ENCODE measurements at regions of chr1 and their contacts with region 1.

Region 1: DNA sequence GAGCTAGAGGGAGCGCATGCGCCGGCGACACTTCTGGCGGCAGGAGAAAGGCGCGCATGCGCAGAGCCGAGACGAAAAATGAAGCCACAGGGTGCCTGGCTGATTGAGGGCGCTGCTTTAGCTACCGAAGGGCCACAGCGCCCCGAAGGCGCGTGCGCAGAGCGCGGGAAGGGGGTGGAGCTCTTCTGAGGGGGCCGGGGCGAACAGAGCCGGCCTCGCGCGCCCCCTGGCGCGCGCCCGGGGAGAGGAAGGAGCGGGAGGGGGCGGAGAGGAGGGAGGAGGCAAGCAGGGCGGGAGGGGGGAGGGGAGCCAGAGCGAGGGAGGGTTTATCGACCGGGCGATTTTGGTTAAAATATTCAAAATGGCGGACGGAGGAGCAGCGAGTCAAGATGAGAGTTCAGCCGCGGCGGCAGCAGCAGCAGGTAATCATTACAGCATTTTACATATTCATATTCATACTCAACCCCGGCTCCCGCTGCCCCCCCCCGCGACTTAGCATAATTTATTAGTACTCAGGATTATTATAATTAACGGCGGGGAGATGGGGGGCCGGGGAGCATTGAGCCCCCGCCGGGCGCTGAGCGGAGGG is at the start of gene POU2F1:
- DNase-seq: peak; percentile 97
- H3K4me3 ChIP-seq: peak within 1 kb of the TSS; percentile 88 to 90 (median 90)
- H3K27ac ChIP-seq: peak within 1 kb of the TSS; percentile 91
- H3K4me1 ChIP-seq: peaks cover 12% of the 10 kb centered on the region
- H3K27me3 ChIP-seq: no peaks in the 10 kb centered on the region
- CTCF ChIP-seq: peak; percentile 25 to 79
- total RNA-seq, gene POU2F1: 10.2 to 14.4 TPM

Region 2: DNA sequence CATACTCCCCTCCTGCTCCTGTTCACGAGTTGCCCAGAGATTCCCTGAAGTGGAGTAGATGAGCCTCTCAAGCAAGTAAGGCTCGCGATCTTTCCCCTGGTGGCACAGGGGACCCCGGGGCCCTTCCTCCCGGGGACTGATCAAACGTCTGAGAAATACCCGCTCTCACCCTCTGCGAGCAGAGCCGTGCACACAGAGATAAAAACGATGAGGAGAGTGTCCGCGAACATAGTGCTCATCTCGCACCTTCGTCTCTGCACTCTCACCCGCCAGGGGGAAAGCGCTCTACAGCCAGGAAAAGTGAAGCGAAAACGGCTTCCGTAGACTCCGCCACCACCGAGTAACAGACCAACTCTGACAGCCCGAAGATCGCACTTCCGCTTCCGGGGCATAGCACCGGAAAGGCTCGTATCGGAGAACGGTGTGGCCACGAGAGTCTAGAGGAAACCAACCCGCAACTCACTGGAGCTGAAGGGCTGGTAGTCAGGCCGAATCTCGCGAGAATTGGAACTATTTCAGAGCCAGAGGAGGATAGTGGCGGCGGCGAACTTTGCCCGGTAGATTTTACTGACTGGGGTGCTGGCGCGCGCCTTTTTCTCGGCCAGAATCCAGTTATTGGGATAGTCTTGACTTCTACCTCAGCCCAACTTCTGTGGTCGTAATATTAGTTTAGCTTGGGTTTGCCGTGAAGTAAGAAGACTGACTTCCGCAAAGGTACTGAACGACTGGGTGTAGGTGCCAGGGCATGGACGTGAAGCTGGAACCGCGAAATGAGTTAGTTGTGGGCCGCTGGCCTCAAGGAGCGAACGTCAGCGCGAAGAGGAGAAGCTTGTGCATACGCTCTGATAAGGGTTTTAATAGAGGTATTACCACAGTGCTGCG is 1451.9 kb before region 1 on chr1 and contains the start of gene TMCO1:
- CTCF ChIA-PET with region 1: interaction called, 10 read pairs
- dilution Hi-C with region 1: no loop called
- in situ Hi-C with region 1: no loop called
- intact Hi-C with region 1: no loop called
- DNase-seq: peak; percentile 97
- H3K4me3 ChIP-seq: peak within 1 kb of the TSS; percentile 66 to 87 (median 82)
- H3K27ac ChIP-seq: peak within 1 kb of the TSS; percentile 88
- H3K4me1 ChIP-seq: peaks cover 27% of the 10 kb centered on the region
- H3K27me3 ChIP-seq: no peaks in the 10 kb centered on the region
- CTCF ChIP-seq: peak in 1 of 2 donors; percentile 33
- total RNA-seq, gene TMCO1: 79.0 to 80.9 TPM

Region 3: DNA sequence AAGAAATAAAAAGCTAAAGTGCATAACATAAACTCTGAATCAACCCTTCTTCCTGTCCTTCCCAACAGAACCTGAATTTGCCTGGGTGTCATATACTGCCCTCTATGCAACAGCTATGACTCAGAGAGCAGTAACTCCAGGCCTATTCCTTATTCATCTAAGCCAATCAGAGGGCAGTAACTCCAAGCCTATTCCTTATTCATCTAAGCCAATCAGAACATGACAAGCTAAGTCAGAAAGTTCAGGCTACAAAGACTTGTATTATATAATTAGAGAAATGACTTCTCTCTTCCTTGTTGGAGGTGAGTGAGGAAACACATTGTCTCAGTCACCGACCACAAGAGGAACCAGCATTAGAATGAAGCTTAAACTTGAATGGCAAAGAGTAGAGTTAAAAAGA is 318.4 kb before region 1 on chr1:
- CTCF ChIA-PET with region 1: no interaction called
- dilution Hi-C with region 1: no loop called
- in situ Hi-C with region 1: no loop called
- intact Hi-C with region 1: no loop called
- DNase-seq: peak; percentile 84
- H3K4me3 ChIP-seq: no peak overlapping the region
- H3K27ac ChIP-seq: no peak overlapping the region
- H3K4me1 ChIP-seq: peaks cover 8% of the 10 kb centered on the region
- H3K27me3 ChIP-seq: no peaks in the 10 kb centered on the region
- CTCF ChIP-seq: peak in 1 of 2 donors; percentile 6

Region 4: GRCh38 chr1:166925810-166926478 is 294.7 kb before region 1 on chr1:
- CTCF ChIA-PET with region 1: interaction called, 10 read pairs
- dilution Hi-C with region 1: no loop called
- in situ Hi-C with region 1: no loop called
- intact Hi-C with region 1: no loop called
- DNase-seq: no peak
- H3K4me3 ChIP-seq: no peak overlapping the region
- H3K27ac ChIP-seq: no peak overlapping the region
- H3K4me1 ChIP-seq: no peaks in the 10 kb centered on the region
- H3K27me3 ChIP-seq: peaks cover 12% of the 10 kb centered on the region
- CTCF ChIP-seq: no peak

Region 5: DNA sequence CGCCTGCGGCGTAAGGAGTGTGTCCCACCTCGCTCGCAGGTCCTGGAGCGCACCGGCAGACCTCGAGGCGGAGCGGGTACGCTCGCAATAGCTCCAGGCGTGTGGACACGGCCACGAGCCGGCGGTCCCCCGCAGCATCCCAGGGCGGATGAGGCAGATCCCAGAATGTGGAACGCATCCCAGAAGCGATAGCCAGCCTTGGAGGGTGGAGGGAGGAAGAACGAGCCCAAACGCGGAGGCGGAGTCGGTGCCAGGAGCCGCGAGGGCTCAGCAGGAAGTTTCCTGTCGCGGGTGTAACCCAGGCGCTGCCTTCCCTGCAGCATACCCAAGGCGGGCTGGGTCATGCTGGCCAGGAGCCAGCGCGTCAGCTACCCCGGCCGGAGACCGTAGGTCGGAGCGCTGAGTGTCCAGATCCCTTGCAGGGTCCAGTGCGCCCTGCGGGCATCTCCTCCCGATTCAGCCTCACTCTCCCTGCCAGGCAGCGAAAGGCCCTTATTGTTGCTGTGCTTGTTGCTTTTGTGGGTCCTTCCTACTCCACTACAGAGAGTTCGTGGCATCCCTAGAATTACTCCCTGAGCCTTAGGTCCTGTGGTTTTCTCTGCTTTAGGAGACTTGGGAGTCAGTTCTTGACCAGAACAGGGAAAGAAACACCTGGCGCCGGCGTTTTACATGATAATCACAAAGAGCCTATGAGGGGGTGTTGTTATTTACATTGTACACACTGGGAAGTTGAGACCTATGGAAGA is 99.1 kb before region 1 on chr1:
- CTCF ChIA-PET with region 1: no interaction called
- dilution Hi-C with region 1: no loop called
- in situ Hi-C with region 1: no loop called
- intact Hi-C with region 1: loop called (anchors 5 kb)
- DNase-seq: peak; percentile 32
- H3K4me3 ChIP-seq: peak overlapping the region in 2 of 3 experiments; percentile 28 to 41
- H3K27ac ChIP-seq: no peak overlapping the region
- H3K4me1 ChIP-seq: peaks cover 6% of the 10 kb centered on the region
- H3K27me3 ChIP-seq: no peaks in the 10 kb centered on the region
- CTCF ChIP-seq: no peak

Region 6: DNA sequence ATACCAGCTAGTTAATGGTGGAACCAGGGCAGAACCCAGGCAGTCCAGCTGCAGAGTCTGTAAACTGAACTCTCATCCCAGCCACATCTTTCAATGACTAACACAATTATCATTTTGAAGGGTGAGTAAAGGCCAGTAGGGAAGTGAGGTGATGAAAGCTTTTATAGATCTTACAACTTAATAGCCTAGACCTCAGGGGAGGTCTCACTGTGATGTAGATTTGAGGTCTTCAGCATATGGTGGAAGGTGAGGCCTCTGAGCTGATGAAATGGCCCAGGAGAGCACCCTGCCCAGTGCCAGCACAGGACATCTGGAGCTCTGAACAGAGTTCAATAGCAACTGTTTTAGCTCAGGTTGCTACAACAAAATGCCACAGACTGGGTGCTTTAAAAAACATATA is 44.7 kb before region 1 on chr1:
- CTCF ChIA-PET with region 1: interaction called, 35 read pairs
- dilution Hi-C with region 1: no loop called
- in situ Hi-C with region 1: no loop called
- intact Hi-C with region 1: no loop called
- DNase-seq: peak; percentile 56
- H3K4me3 ChIP-seq: no peak overlapping the region
- H3K27ac ChIP-seq: peak overlapping the region; percentile 25
- H3K4me1 ChIP-seq: peaks cover 18% of the 10 kb centered on the region
- H3K27me3 ChIP-seq: no peaks in the 10 kb centered on the region
- CTCF ChIP-seq: no peak

Region 7: GRCh38 chr1:167491586-167492461 is 271.2 kb after region 1 on chr1:
- CTCF ChIA-PET with region 1: interaction called, 11 read pairs
- dilution Hi-C with region 1: no loop called
- in situ Hi-C with region 1: no loop called
- intact Hi-C with region 1: no loop called
- DNase-seq: no peak
- H3K4me3 ChIP-seq: no peak overlapping the region
- H3K27ac ChIP-seq: no peak overlapping the region
- H3K4me1 ChIP-seq: no peaks in the 10 kb centered on the region
- H3K27me3 ChIP-seq: no peaks in the 10 kb centered on the region
- CTCF ChIP-seq: no peak

Measured in mammary epithelial cell (primary cell).